Caco-2 (cell line): ENCODE measurements at regions of chr1 and their contacts with region 1.

Region 1: GRCh38 chr1:111139956-111140679 is at the starts of genes CEPT1 and DRAM2:
- DNase-seq: peak; percentile 93 to 95
- H3K4me3 ChIP-seq: peak within 1 kb of the TSS; percentile 56
- H3K4me3 Mint-ChIP-seq: peak within 1 kb of the TSS; percentile 87
- H3K27ac Mint-ChIP-seq: peak within 1 kb of the TSS; percentile 89
- H3K4me1 ChIP-seq: peaks cover 14% of the 10 kb centered on the region; the same call in 1 of the 2 replicates
- H3K4me1 Mint-ChIP-seq: peaks cover 18% of the 10 kb centered on the region
- H3K27me3 ChIP-seq: no peaks in the 10 kb centered on the region
- H3K27me3 Mint-ChIP-seq: no peaks in the 10 kb centered on the region
- CTCF ChIP-seq: no peak
- total RNA-seq, gene CEPT1: 17.3 and 19.1 TPM in 2 replicates
- total RNA-seq, gene DRAM2: 25.3 and 29.0 TPM in 2 replicates

Region 2: DNA sequence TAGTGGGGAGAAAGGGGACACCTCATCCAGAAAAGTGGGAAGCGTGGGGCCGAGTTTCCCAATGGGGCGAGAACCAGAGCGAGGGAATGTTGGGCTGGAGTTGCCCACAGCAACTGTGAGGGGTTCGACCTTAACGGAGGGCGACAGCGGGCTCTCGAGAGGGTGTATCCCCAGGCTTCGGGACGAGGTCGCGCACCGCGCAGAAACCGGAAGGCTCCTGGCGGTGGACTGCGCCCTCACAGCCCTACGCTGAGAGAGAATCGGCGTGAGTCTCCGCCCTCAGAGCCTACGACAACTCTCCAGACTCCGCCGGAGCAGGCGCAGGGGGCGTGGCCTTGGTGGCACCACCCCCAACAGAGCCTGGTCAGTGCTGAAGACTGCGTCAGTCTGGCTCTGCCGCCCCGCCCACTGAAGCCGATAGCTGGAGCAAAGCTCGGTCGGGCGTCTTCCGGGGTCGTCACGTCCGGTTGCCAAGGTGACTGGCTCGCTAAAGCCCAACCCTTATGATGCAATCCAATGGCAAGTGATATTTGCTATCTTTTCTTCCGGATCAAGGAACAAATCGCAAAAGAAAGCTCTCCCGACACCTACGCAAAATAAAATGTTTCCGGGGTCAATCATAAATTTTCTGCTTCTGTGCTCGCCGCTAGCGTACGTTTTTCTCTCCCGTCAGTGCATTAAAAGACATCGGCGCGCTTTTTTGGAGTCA is 176.3 kb before region 1 on chr1 and contains the start of gene LRIF1:
- CTCF ChIA-PET with region 1: no interaction called
- POLR2A ChIA-PET with region 1: interaction called, 3 read pairs
- intact Hi-C with region 1: loop called (anchors 5 kb)
- DNase-seq: peak; percentile 99
- H3K4me3 ChIP-seq: peak within 1 kb of the TSS; percentile 76
- H3K4me3 Mint-ChIP-seq: peak within 1 kb of the TSS; percentile 87
- H3K27ac Mint-ChIP-seq: peak within 1 kb of the TSS; percentile 95
- H3K4me1 ChIP-seq: peaks cover 19% of the 10 kb centered on the region
- H3K4me1 Mint-ChIP-seq: peaks cover 21% of the 10 kb centered on the region
- H3K27me3 ChIP-seq: no peaks in the 10 kb centered on the region
- H3K27me3 Mint-ChIP-seq: no peaks in the 10 kb centered on the region
- CTCF ChIP-seq: peak in 1 of 2 experiments; percentile 28
- total RNA-seq, gene LRIF1: 31.7 and 35.2 TPM in 2 replicates

Region 3: GRCh38 chr1:111006541-111006940 is 133.6 kb before region 1 on chr1:
- CTCF ChIA-PET with region 1: no interaction called
- POLR2A ChIA-PET with region 1: no interaction called
- intact Hi-C with region 1: no loop called
- DNase-seq: no peak
- H3K4me3 ChIP-seq: no peak overlapping the region
- H3K4me3 Mint-ChIP-seq: no peak overlapping the region
- H3K27ac Mint-ChIP-seq: no peak overlapping the region
- H3K4me1 ChIP-seq: no peaks in the 10 kb centered on the region
- H3K4me1 Mint-ChIP-seq: no peaks in the 10 kb centered on the region
- H3K27me3 ChIP-seq: no peaks in the 10 kb centered on the region
- H3K27me3 Mint-ChIP-seq: peaks cover 4% of the 10 kb centered on the region
- CTCF ChIP-seq: no peak

Region 4: DNA sequence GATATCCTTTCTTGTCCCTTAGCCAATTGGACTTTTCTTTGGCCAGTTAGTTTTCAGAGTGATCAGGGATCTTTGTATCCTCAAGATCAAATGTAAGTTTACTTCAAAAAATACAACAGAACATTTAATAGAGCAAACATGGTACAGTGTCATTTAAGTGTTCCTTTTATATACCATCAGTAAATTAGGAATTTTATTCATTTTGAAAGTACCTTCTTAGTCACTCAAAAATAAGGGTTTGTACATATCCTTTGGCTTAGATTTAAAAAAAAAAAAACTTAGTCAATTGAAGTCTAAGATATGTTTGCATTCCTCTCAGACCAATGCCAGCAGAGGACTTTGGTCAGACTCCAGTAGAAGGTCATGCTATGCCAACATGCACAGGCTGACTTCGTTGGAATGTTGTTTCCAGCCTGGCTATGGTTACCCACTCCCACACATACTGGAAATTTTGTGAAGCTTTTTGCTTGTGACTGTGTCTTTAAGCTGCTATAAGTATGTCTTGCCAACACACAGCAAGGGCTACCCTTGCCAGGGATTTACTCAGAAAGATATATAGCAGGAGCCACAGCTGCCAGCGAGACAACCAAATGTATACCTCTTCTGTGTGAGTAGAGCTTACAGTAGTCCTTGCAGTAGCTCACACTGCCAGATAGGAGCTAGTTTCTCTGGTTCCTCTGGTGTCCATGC is 94.9 kb before region 1 on chr1:
- CTCF ChIA-PET with region 1: no interaction called
- POLR2A ChIA-PET with region 1: no interaction called
- intact Hi-C with region 1: loop called (anchors 10 kb)
- DNase-seq: peak; percentile 50 to 61
- H3K4me3 ChIP-seq: no peak overlapping the region
- H3K4me3 Mint-ChIP-seq: no peak overlapping the region
- H3K27ac Mint-ChIP-seq: no peak overlapping the region
- H3K4me1 ChIP-seq: peaks cover 9% of the 10 kb centered on the region
- H3K4me1 Mint-ChIP-seq: no peaks in the 10 kb centered on the region
- H3K27me3 ChIP-seq: no peaks in the 10 kb centered on the region
- H3K27me3 Mint-ChIP-seq: no peaks in the 10 kb centered on the region
- CTCF ChIP-seq: no peak

Region 5: DNA sequence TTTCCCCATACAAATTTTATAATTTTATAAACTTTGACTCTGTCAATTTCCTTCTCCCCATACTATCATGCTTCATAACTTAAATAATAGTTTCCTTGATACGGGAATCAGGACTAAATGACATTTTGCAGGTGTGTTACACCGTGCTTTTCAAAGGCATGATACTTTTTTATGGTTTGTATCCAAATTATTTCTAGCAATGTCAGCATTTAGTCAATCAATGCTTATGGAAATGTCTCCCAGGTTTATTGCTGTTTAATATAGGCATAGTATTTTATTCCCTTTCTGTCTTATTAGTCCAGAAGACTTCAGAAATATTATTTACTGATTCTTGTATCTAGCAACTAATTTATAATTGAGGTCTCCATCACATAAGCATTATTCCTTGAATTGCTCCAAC is 23.6 kb before region 1 on chr1:
- CTCF ChIA-PET with region 1: no interaction called
- POLR2A ChIA-PET with region 1: interaction called, 12 read pairs
- intact Hi-C with region 1: no loop called
- DNase-seq: no peak
- H3K4me3 ChIP-seq: no peak overlapping the region
- H3K4me3 Mint-ChIP-seq: no peak overlapping the region
- H3K27ac Mint-ChIP-seq: no peak overlapping the region
- H3K4me1 ChIP-seq: peaks cover 12% of the 10 kb centered on the region; the same call in 1 of the 2 replicates
- H3K4me1 Mint-ChIP-seq: peaks cover 6% of the 10 kb centered on the region
- H3K27me3 ChIP-seq: no peaks in the 10 kb centered on the region
- H3K27me3 Mint-ChIP-seq: no peaks in the 10 kb centered on the region
- CTCF ChIP-seq: no peak

Region 6: DNA sequence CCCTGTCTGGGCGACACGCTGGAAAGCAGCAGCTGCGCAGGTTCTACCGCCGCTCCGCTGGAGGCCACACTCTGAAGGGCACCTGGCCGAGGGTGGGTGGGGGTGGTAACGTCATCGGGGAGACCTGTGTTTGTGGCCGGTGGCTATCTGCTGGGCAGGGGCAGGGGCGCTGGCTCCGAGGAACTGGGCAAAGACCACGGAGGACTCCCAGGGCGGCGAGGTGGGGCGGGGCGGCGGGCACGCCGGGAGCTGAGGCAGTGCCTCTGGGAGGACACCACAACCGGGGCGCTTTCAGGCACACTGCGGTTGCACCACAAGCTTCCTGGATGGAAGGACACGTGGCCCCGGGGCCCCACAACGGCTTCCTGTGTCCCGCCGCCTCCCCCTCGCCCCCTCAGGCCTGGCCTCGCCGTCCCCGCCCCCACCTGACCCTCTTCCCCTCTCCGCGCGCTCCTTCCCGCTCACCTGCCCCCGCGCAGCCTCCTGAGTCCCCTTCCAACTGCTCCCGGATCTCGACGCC is 63.6 kb after region 1 on chr1:
- CTCF ChIA-PET with region 1: no interaction called
- POLR2A ChIA-PET with region 1: no interaction called
- intact Hi-C with region 1: loop called (anchors 5 kb)
- DNase-seq: peak; percentile 80 to 89
- H3K4me3 ChIP-seq: peak overlapping the region; percentile 54
- H3K4me3 Mint-ChIP-seq: peak overlapping the region; percentile 77
- H3K27ac Mint-ChIP-seq: peak overlapping the region; percentile 49
- H3K4me1 ChIP-seq: peaks cover 34% of the 10 kb centered on the region
- H3K4me1 Mint-ChIP-seq: peaks cover 14% of the 10 kb centered on the region
- H3K27me3 ChIP-seq: no peaks in the 10 kb centered on the region
- H3K27me3 Mint-ChIP-seq: no peaks in the 10 kb centered on the region
- CTCF ChIP-seq: no peak